ENCODE measurements at regions of chr12 and their contacts with region 1.

Region 1: DNA sequence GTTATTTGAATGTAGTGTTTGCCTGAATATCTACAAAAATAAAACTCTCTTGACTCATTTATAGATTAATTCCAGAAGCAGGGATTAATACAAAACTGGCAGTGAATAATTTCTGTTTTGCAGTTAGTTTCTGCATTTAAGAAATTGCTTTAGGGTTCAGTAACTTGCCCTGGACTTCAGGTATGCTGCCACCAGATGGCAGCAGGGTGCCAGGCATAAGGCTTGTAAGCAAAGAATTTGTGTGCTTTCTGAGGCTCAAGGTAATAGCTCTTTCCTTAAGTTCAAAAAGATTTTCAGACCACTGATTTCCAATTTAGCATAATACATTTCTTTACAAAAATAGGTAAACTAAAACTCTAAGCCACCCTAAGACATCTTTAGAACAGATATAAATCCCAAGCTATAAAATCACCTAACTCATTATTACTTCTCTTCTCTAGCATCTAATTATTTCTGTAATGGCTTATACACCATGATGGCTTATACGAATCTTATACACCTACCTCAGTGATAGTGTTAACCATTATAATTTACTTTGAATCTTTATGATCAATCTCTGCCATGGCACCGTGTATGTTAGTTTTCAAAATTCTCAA is 398.3 kb downstream of the APAF1 start:
- DNase-seq: peak; percentile 69
- H3K4me3 Mint-ChIP-seq: no peak overlapping the region
- H3K27ac Mint-ChIP-seq: no peak overlapping the region
- H3K4me1 Mint-ChIP-seq: no peaks in the 10 kb centered on the region
- H3K27me3 Mint-ChIP-seq: no peaks in the 10 kb centered on the region
- CTCF ChIP-seq: peak; percentile 95

Region 2: DNA sequence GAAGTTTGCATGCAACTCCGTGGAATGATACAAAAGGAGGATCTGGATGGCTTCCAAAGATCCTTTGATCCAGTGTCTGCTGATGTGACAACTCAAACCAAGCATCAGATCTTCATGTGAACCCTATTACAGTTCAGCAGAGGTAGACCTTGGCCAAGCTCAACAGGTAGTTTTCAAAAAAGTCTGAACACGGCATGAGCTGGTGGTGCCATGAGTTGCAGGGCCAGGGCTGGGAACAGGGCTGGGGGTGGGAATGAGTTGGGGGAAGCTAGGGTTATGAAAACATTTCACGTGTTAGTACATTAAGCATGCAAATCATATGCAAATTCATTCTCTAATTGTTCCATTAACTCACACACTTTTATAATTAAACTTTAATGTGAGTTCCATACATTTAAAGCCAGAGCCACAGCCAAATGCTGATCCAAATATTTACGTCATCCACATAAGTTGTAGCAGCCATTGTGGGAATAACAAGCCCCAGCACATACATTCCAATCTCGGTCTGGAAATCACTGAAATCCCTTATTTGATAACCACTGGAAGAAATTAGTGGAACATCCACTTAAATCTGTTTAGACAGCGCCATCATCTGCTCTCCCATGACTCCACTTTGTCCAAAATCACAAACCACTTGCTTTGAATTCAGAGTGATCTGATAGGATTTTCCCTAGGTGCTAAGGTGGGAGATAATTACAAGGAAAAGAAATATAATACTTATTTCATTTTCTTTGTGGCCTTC is 239.8 kb before region 1 on chr12:
- CTCF ChIA-PET with region 1: no interaction called
- POLR2A ChIA-PET with region 1: no interaction called
- intact Hi-C with region 1: no loop called
- DNase-seq: no peak
- H3K4me3 Mint-ChIP-seq: no peak overlapping the region
- H3K27ac Mint-ChIP-seq: no peak overlapping the region
- H3K4me1 Mint-ChIP-seq: no peaks in the 10 kb centered on the region
- H3K27me3 Mint-ChIP-seq: no peaks in the 10 kb centered on the region
- CTCF ChIP-seq: no peak

Region 3: DNA sequence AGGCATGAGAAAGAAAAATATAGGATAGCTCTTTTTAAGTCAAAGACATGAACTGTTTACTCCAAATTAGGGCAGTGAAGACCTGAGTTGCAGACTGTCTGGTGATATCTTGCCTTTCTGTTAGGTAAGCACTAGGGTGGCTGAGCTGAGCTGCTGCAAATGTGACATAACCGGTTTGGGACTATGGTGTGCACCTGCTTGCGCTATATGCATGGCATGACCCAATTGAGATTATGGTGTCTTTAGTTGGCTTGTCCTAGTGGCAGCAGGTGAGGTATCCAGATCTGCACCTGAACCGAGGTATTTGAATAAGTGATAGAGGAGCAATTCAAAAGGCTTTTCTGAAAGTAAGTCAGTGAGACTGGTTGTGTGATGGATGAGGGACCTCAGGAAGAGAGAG is 52.7 kb before region 1 on chr12:
- CTCF ChIA-PET with region 1: no interaction called
- POLR2A ChIA-PET with region 1: no interaction called
- intact Hi-C with region 1: no loop called
- DNase-seq: no peak
- H3K4me3 Mint-ChIP-seq: no peak overlapping the region
- H3K27ac Mint-ChIP-seq: no peak overlapping the region
- H3K4me1 Mint-ChIP-seq: no peaks in the 10 kb centered on the region
- H3K27me3 Mint-ChIP-seq: no peaks in the 10 kb centered on the region
- CTCF ChIP-seq: no peak

Region 4: GRCh38 chr12:99029511-99030271 is 13.7 kb before region 1 on chr12:
- CTCF ChIA-PET with region 1: interaction called, 45 read pairs
- POLR2A ChIA-PET with region 1: no interaction called
- intact Hi-C with region 1: no loop called
- DNase-seq: no peak
- H3K4me3 Mint-ChIP-seq: no peak overlapping the region
- H3K27ac Mint-ChIP-seq: no peak overlapping the region
- H3K4me1 Mint-ChIP-seq: peaks cover 6% of the 10 kb centered on the region
- H3K27me3 Mint-ChIP-seq: no peaks in the 10 kb centered on the region
- CTCF ChIP-seq: no peak

Region 5: GRCh38 chr12:99053616-99054362 is 10.4 kb after region 1 on chr12:
- CTCF ChIA-PET with region 1: interaction called, 13 read pairs
- POLR2A ChIA-PET with region 1: interaction called, 3 read pairs
- intact Hi-C with region 1: no loop called
- DNase-seq: no peak
- H3K4me3 Mint-ChIP-seq: no peak overlapping the region
- H3K27ac Mint-ChIP-seq: no peak overlapping the region
- H3K4me1 Mint-ChIP-seq: no peaks in the 10 kb centered on the region
- H3K27me3 Mint-ChIP-seq: no peaks in the 10 kb centered on the region
- CTCF ChIP-seq: no peak

Region 6: DNA sequence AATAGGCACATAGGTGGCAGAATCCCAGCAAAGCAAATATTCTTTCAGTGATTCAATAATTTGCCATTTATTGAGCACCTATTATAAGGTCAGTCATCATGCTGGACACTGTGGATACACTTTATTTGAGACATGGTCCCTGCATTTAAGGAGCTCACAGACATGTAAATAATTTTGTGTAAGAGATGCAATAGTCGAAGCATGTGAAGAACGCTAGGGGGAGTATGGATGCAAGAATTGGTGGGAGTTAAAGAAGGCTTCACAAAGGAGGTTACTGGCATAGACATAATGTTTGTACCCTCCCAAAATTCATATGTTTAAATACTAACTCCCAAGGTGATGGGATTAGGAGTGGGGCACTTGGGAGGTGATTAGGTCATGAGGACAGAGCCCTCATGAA is 343.5 kb after region 1 on chr12:
- CTCF ChIA-PET with region 1: interaction called, 35 read pairs
- POLR2A ChIA-PET with region 1: no interaction called
- intact Hi-C with region 1: loop called (anchors 1 kb)
- DNase-seq: peak; percentile 70
- H3K4me3 Mint-ChIP-seq: no peak overlapping the region
- H3K27ac Mint-ChIP-seq: no peak overlapping the region
- H3K4me1 Mint-ChIP-seq: peaks cover 4% of the 10 kb centered on the region
- H3K27me3 Mint-ChIP-seq: no peaks in the 10 kb centered on the region
- CTCF ChIP-seq: peak; percentile 66

Region 7: GRCh38 chr12:99498756-99499155 is 455.3 kb after region 1 on chr12:
- CTCF ChIA-PET with region 1: no interaction called
- POLR2A ChIA-PET with region 1: no interaction called
- intact Hi-C with region 1: loop called (anchors 10 kb)
- DNase-seq: peak; percentile 76
- H3K4me3 Mint-ChIP-seq: no peak overlapping the region
- H3K27ac Mint-ChIP-seq: no peak overlapping the region
- H3K4me1 Mint-ChIP-seq: peaks cover 21% of the 10 kb centered on the region
- H3K27me3 Mint-ChIP-seq: no peaks in the 10 kb centered on the region
- CTCF ChIP-seq: no peak

Region 8: DNA sequence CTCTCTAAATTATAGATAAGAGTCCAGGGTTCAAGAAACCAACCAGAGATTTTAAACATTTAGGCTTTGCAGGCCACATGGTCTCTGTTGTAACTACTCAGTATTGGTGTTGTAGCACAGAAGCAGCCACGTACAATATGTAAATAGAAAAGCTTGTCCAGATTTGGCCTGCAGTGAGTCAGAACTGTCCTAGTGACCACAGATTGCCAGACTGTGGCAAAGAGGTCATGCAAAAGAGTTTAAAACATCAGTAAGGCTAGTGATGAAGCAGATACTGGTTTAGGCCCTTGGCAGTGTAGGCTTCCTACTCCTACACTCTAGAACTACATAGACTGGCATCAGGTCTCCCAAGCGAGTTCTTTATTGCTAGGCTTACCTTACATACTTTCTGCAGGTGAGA is 486.5 kb after region 1 on chr12:
- CTCF ChIA-PET with region 1: no interaction called
- POLR2A ChIA-PET with region 1: no interaction called
- intact Hi-C with region 1: no loop called
- DNase-seq: peak; percentile 53
- H3K4me3 Mint-ChIP-seq: no peak overlapping the region
- H3K27ac Mint-ChIP-seq: no peak overlapping the region
- H3K4me1 Mint-ChIP-seq: peaks cover 6% of the 10 kb centered on the region
- H3K27me3 Mint-ChIP-seq: no peaks in the 10 kb centered on the region
- CTCF ChIP-seq: no peak

Region 9: GRCh38 chr12:99658671-99659349 is 615.4 kb after region 1 on chr12:
- CTCF ChIA-PET with region 1: interaction called, 82 read pairs
- POLR2A ChIA-PET with region 1: interaction called, 3 read pairs
- intact Hi-C with region 1: loop called (anchors 1 kb)
- DNase-seq: peak; percentile 6
- H3K4me3 Mint-ChIP-seq: no peak overlapping the region
- H3K27ac Mint-ChIP-seq: no peak overlapping the region
- H3K4me1 Mint-ChIP-seq: no peaks in the 10 kb centered on the region
- H3K27me3 Mint-ChIP-seq: no peaks in the 10 kb centered on the region
- CTCF ChIP-seq: peak; percentile 40

Region 10: GRCh38 chr12:99767809-99768208 is 724.4 kb after region 1 on chr12:
- CTCF ChIA-PET with region 1: interaction called, 69 read pairs
- POLR2A ChIA-PET with region 1: no interaction called
- intact Hi-C with region 1: loop called (anchors 1 kb)
- DNase-seq: peak; percentile 35
- H3K4me3 Mint-ChIP-seq: no peak overlapping the region
- H3K27ac Mint-ChIP-seq: no peak overlapping the region
- H3K4me1 Mint-ChIP-seq: no peaks in the 10 kb centered on the region
- H3K27me3 Mint-ChIP-seq: no peaks in the 10 kb centered on the region
- CTCF ChIP-seq: peak; percentile 52